Activated CD4-positive, alpha-beta T cell treated with anti-CD3 and anti-CD28 coated beads for 36 hours (primary cell): ENCODE measurements at regions of chr2 and their contacts with region 1.

Region 1: GRCh38 chr2:110843959-110844510 is 111.7 kb downstream of the ACOXL start:
- DNase-seq: peak; percentile 35
- ATAC-seq: peak; percentile 27
- H3K4me3 Mint-ChIP-seq: no peak overlapping the region
- H3K27ac Mint-ChIP-seq: no peak overlapping the region
- H3K4me1 Mint-ChIP-seq: peaks cover 58% of the 10 kb centered on the region
- H3K27me3 Mint-ChIP-seq: peaks cover 33% of the 10 kb centered on the region

Region 2: DNA sequence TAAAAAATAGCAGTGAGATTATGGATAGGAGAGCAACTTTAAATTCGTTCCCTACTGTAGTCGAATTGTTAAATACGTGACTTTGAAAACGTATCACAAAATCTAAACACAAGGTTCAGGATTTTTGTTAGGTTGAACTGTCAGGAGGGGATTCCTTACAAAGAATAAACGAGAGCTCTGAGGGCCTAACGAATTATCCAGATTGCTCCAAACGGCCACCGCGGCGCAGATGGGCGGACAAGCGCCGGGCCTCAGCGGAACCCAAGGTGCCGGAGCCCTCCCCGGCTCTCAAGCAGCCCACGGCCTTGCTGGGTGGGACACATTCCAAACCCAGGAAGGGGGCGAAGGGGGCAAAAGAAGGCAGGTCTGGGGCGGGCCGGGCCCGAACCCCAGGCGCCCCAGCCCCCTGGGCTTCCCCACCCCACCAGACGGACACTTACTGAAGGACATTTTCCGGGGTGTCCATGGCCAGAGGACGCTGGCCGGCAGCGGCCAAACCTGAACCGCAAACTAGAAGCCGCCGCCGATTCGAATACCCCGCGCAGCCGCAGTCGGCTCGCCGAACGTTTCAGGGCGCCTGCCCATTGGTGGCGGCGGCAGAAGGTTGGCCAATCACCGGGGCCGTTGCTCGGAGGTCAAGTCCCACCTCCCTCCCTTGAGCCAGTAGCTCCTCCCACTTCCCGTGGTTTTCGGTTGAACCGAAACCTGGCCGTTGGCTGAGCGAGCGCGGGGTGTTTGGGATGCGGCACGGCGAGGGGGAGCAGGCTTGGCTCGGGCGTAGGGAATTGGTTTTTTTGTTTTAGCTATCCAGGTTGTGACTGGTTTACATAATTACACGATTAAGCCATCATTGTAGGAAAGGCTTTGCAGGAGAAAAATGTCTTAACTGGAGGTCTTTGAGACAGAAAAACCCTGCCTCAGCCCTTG is 166.2 kb before region 1 on chr2 and contains the start of gene BUB1:
- CTCF ChIA-PET with region 1: no interaction called
- POLR2A ChIA-PET with region 1: interaction called, 7 read pairs
- intact Hi-C with region 1: loop called in 1 of 2 experiments (anchors 5 kb)
- DNase-seq: peak; percentile 98
- ATAC-seq: peak; percentile 99
- H3K4me3 Mint-ChIP-seq: peak within 1 kb of the TSS; percentile 96
- H3K27ac Mint-ChIP-seq: peak within 1 kb of the TSS; percentile 97
- H3K4me1 Mint-ChIP-seq: peaks cover 30% of the 10 kb centered on the region
- H3K27me3 Mint-ChIP-seq: peaks cover 4% of the 10 kb centered on the region
- total RNA-seq, gene BUB1: 93.5 to 115 TPM

Region 3: DNA sequence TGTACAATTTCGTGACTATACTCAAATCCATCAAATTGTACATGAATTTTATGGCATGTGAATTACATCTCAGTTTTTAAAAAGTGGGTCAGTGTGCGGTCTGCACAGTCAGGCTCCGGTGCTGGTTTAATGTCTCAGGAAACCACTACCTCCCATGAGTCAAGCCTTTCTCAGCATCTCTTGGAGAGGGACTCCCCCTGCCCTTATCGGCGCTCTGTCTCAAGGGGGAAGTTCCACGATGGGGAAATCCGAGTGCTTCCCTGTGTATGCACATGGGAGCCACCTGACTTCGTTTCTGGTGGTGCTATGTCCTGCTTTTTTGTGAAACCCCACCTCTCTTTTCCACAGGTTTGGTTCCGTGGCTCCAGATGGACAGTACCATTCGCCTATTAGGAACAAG is 39.1 kb before region 1 on chr2:
- CTCF ChIA-PET with region 1: no interaction called
- POLR2A ChIA-PET with region 1: interaction called, 3 read pairs
- intact Hi-C with region 1: loop called (anchors 1 to 2 kb)
- DNase-seq: peak; percentile 80
- ATAC-seq: peak; percentile 99
- H3K4me3 Mint-ChIP-seq: no peak overlapping the region
- H3K27ac Mint-ChIP-seq: no peak overlapping the region
- H3K4me1 Mint-ChIP-seq: peaks cover 15% of the 10 kb centered on the region
- H3K27me3 Mint-ChIP-seq: peaks cover 57% of the 10 kb centered on the region

Region 4: GRCh38 chr2:110812726-110813645 is 31.0 kb before region 1 on chr2:
- CTCF ChIA-PET with region 1: interaction called, 10 read pairs
- POLR2A ChIA-PET with region 1: no interaction called
- intact Hi-C with region 1: no loop called
- DNase-seq: no peak
- ATAC-seq: no peak
- H3K4me3 Mint-ChIP-seq: no peak overlapping the region
- H3K27ac Mint-ChIP-seq: no peak overlapping the region
- H3K4me1 Mint-ChIP-seq: peaks cover 5% of the 10 kb centered on the region
- H3K27me3 Mint-ChIP-seq: peaks cover 42% of the 10 kb centered on the region